ENCODE measurements at regions of chr3 and their contacts with region 1.

Region 1: GRCh38 chr3:127574880-127575878 is 15.4 kb downstream of the TPRA1 start:
- DNase-seq: peak; percentile 81
- ATAC-seq: peak; percentile 86
- H3K4me3 Mint-ChIP-seq: no peak overlapping the region
- H3K27ac Mint-ChIP-seq: no peak overlapping the region
- H3K4me1 Mint-ChIP-seq: no peaks in the 10 kb centered on the region
- H3K27me3 Mint-ChIP-seq: no peaks in the 10 kb centered on the region; the same call in 1 of the 2 replicates
- CTCF ChIP-seq: peak; percentile 98

Region 2: GRCh38 chr3:127473244-127474024 is 101.7 kb before region 1 on chr3:
- CTCF ChIA-PET with region 1: interaction called, 11 read pairs
- POLR2A ChIA-PET with region 1: no interaction called
- DNase-seq: peak; percentile 87
- ATAC-seq: peak; percentile 99
- H3K4me3 Mint-ChIP-seq: no peak overlapping the region
- H3K27ac Mint-ChIP-seq: no peak overlapping the region
- H3K4me1 Mint-ChIP-seq: no peaks in the 10 kb centered on the region
- H3K27me3 Mint-ChIP-seq: no peaks in the 10 kb centered on the region; the same call in 1 of the 2 replicates
- CTCF ChIP-seq: peak; percentile 61

Region 3: GRCh38 chr3:127549820-127550460 is 25.2 kb before region 1 on chr3:
- CTCF ChIA-PET with region 1: interaction called, 46 read pairs
- POLR2A ChIA-PET with region 1: no interaction called
- DNase-seq: no peak
- ATAC-seq: no peak
- H3K4me3 Mint-ChIP-seq: no peak overlapping the region
- H3K27ac Mint-ChIP-seq: no peak overlapping the region
- H3K4me1 Mint-ChIP-seq: peaks cover 20% of the 10 kb centered on the region
- H3K27me3 Mint-ChIP-seq: peaks cover 8% of the 10 kb centered on the region; the same call in 1 of the 2 replicates
- CTCF ChIP-seq: no peak

Region 4: DNA sequence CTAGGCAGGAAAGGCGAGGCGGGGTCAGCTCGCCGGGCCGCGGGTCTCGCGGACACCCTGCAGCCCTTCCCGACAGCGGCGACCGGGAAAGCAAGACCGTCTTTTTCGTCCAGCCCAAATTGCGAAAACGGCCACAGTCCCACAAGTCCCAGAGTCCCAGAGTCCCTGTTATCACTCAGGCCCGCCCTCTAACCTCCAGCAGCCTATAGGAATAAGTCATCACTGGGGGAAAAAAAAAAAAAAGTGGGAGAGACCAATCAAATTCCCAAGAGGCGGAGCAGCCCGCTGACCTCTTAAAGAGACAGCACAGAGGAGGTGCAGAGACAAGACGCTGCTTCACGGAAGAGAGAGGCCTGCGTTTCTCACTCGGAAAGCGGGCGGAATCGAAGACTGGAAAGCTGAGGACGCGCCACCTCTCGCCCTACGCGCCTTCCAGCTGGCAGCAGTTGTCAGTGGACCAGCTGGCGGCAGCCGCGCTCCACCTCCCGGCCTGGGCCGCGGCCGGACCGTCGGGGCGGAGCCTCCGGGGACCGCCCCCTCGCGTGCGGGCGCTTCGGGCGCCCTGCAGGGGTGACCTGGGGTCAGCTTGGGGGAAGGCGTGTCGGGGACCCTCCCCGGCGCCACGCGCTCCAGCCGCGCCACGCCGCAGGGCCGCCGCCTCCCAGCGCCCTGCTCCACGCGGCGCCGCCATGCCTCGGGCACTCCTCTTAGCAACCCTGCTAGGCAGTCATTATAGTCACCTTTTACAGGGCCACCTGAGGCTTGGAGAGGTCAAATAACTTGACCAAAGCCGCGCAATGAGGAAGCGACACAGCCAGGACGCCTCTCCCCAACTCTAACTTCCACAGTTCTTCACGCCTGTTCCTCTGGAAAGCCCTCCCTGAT is 15.7 kb after region 1 on chr3 and contains the start of gene TPRA1:
- CTCF ChIA-PET with region 1: interaction called, 77 read pairs
- POLR2A ChIA-PET with region 1: interaction called, 5 read pairs
- DNase-seq: peak; percentile 79
- ATAC-seq: peak; percentile 90
- H3K4me3 Mint-ChIP-seq: peak within 1 kb of the TSS; percentile 86
- H3K27ac Mint-ChIP-seq: peak within 1 kb of the TSS; percentile 90
- H3K4me1 Mint-ChIP-seq: peaks cover 19% of the 10 kb centered on the region
- H3K27me3 Mint-ChIP-seq: peaks cover 7% of the 10 kb centered on the region
- CTCF ChIP-seq: no peak
- total RNA-seq, gene TPRA1: 20.3 to 24.2 TPM (median 22.0 TPM) in 3 replicates

Region 5: DNA sequence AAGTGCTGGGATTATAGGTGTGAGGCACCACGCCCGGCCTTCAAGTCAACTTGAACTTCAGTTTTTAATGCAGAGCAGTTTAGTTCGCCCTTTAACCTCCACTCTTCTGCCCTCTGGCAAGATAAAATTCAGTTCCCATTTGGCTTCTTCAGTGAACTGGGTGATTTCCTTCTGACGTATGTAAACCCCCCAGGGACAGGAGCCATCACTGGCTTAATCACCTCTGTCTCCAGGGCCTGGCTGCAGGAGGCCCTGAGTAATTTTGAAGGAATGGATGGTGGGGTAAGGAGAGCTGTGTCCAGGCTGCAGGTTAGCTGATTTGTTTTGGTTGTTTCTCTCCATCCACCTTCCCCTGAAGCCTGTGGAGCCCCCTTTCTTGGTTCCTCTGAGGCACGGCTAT is 34.9 kb after region 1 on chr3:
- CTCF ChIA-PET with region 1: interaction called, 16 read pairs
- POLR2A ChIA-PET with region 1: no interaction called
- DNase-seq: no peak
- ATAC-seq: no peak
- H3K4me3 Mint-ChIP-seq: no peak overlapping the region
- H3K27ac Mint-ChIP-seq: no peak overlapping the region
- H3K4me1 Mint-ChIP-seq: no peaks in the 10 kb centered on the region
- H3K27me3 Mint-ChIP-seq: no peaks in the 10 kb centered on the region
- CTCF ChIP-seq: no peak

Region 6: DNA sequence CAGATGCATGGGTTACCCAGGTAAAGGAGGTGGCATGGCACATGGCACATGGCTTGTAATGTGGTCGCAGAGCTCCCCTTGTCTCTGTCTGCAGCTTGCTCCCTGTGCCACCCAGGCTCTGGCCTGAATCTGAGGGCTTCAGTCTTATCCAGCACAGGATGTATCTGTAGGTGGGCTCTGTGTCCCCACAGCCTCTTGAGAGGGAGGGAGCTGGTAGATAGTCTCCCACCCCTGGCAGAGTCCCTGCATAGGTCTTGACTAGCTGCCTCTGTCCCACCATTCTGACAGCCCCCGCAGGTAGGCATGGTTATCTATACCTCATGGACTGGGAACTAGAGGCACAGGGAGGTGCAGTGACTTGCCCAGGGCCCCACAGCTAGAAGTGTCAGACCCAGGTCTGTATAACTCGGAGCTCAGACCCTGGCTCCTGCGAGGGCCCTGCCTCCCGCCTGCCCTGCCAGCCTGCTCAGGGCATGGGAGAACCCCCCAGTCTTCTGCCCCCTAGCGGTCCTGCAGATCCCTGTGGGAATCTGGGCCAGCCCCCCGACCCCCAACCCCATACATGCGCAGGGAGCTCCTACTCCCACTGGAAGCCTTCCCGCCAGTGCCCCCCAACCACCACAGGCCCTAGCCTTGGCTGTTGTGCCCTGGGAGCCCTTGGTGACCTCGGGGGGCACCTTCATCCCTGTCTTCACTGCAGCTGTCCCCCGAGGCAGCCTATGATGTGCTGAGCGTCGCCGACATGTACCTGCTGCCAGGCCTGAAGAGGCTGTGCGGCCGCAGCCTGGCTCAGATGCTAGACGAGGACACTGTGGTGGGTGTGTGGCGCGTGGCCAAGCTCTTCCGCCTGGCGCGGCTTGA is 104.3 kb after region 1 on chr3:
- CTCF ChIA-PET with region 1: interaction called, 14 read pairs
- POLR2A ChIA-PET with region 1: no interaction called
- DNase-seq: peak; percentile 69
- ATAC-seq: peak; percentile 73
- H3K4me3 Mint-ChIP-seq: no peak overlapping the region
- H3K27ac Mint-ChIP-seq: no peak overlapping the region
- H3K4me1 Mint-ChIP-seq: peaks cover 12% of the 10 kb centered on the region
- H3K27me3 Mint-ChIP-seq: no peaks in the 10 kb centered on the region; the same call in 1 of the 2 replicates
- CTCF ChIP-seq: peak; percentile 52; the same call in 1 of the 2 replicates